Natural killer cell (primary cell): ENCODE measurements at regions of chr1 and their contacts with region 1.

Region 1: DNA sequence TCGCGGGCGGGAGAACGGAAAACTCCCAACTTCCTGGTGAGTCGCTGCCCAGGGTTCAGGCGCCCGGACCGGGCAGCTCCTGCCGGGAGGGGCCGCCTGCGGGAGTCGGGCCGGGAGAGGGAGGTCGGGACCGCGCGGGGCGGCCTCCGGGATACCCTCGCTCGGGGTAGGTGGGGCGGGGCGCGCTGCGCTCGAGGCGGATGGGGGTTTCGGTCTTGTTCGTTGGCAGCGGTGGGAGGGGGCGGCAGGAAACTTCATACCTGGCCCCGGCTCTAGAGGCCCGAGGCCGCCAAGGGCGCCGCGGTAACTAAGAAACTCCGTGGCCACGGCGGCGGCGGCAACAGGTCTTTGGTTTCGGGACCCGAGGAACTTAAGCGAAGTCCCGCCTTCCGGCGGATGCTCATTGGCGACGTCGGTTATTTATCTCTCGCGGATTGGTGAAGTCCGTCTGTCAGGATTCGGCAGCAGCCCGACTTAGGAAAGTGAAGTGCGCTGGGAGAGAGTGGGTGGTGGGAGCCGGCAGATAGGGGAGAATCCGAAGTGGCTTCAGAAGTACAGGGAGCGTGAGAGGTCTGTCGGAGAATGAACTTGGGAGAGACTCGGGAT is 546 bp downstream of the NEK7 start:
- DNase-seq: peak; percentile 74 to 91
- ATAC-seq: peak; percentile 43 to 62 (median 58)
- H3K4me3 ChIP-seq: peak overlapping the region; percentile 73
- H3K4me3 Mint-ChIP-seq: peak overlapping the region; percentile 99
- H3K27ac ChIP-seq: peak overlapping the region; percentile 88
- H3K27ac Mint-ChIP-seq: peak overlapping the region; percentile 96 to 99
- H3K4me1 ChIP-seq: peaks cover 16% of the 10 kb centered on the region
- H3K4me1 Mint-ChIP-seq: peaks cover 39 to 53% of the 10 kb centered on the region in 2 donors
- H3K27me3 ChIP-seq: no peaks in the 10 kb centered on the region
- H3K27me3 Mint-ChIP-seq: no peaks in the 10 kb centered on the region
- CTCF ChIP-seq: no peak

Region 2: DNA sequence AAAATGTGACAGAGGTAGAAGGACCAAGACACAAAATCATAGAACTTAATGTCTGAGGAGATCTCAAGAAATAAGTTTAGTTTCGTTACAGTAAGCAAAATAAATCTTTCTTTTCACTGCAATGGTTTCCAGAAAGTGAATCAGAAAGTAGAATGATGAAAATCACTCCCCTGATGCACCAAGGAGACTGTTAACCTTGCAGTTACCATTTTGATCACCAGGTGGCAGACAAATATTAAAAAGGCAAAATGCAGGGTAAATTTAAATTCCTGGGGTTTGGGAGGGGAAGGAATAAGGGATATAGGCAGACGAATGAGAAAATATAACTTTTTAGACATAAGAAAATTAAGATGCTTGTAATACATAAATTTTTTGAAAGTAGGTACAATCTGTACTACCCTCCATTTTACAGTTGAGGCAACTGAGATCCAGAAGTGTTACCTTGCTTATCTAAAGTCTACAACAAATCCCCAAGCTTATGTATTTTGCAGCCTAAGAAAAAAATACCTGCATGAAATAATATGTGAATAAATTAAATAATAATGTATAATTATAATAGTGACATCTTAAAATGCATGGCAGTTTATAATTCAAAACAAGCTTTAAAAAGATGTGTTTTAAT is 636.1 kb before region 1 on chr1:
- intact Hi-C with region 1: loop called (anchors 10 kb)
- DNase-seq: peak in 1 of 2 donors; percentile 63
- ATAC-seq: peak in 2 of 3 donors; percentile 57 to 64
- H3K4me3 ChIP-seq: no peak overlapping the region
- H3K4me3 Mint-ChIP-seq: no peak overlapping the region
- H3K27ac ChIP-seq: no peak overlapping the region
- H3K27ac Mint-ChIP-seq: no peak overlapping the region
- H3K4me1 ChIP-seq: no peaks in the 10 kb centered on the region
- H3K4me1 Mint-ChIP-seq: peaks cover 0 to 5% of the 10 kb centered on the region in 2 donors
- H3K27me3 ChIP-seq: no peaks in the 10 kb centered on the region
- H3K27me3 Mint-ChIP-seq: no peaks in the 10 kb centered on the region
- CTCF ChIP-seq: peak; percentile 84

Region 3: GRCh38 chr1:197915862-197916499 is 241.4 kb before region 1 on chr1:
- intact Hi-C with region 1: loop called (anchors 10 kb)
- DNase-seq: peak in 1 of 2 donors; percentile 32
- ATAC-seq: peak in 1 of 3 donors; percentile 24
- H3K4me3 ChIP-seq: no peak overlapping the region
- H3K4me3 Mint-ChIP-seq: peak overlapping the region; percentile 63
- H3K27ac ChIP-seq: no peak overlapping the region
- H3K27ac Mint-ChIP-seq: no peak overlapping the region
- H3K4me1 ChIP-seq: peaks cover 78% of the 10 kb centered on the region
- H3K4me1 Mint-ChIP-seq: peaks cover 70 to 80% of the 10 kb centered on the region in 2 donors
- H3K27me3 ChIP-seq: peaks cover 96% of the 10 kb centered on the region
- H3K27me3 Mint-ChIP-seq: peaks cover 89 to 93% of the 10 kb centered on the region in 2 donors
- CTCF ChIP-seq: no peak

Region 4: DNA sequence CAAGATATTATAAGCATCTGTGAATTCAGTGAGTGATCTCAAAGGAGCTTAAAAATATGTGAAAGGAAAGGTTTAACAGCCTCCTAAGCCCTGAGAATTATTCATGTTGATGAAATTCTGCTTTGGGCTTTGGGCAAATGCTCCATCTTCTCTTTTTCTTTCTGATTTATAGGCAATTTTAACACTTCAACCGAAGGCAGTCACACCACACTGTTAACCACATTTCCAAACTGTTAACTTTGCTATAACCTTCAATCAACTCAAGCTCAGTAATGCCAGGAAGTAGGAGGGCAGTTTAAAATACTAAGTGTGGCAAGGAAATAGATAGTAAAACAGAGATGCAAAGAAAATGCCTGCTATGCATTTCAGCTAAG is 54.9 kb before region 1 on chr1:
- intact Hi-C with region 1: loop called (anchors 2 kb)
- DNase-seq: peak in 1 of 2 donors; percentile 67
- ATAC-seq: peak; percentile 80 to 96 (median 84)
- H3K4me3 ChIP-seq: no peak overlapping the region
- H3K4me3 Mint-ChIP-seq: peak overlapping the region; percentile 76
- H3K27ac ChIP-seq: peak overlapping the region; percentile 43
- H3K27ac Mint-ChIP-seq: peak overlapping the region; percentile 65 to 73
- H3K4me1 ChIP-seq: peaks cover 12% of the 10 kb centered on the region
- H3K4me1 Mint-ChIP-seq: peaks cover 28 to 29% of the 10 kb centered on the region in 2 donors
- H3K27me3 ChIP-seq: no peaks in the 10 kb centered on the region
- H3K27me3 Mint-ChIP-seq: peaks cover 0 to 4% of the 10 kb centered on the region in 2 donors
- CTCF ChIP-seq: no peak

Region 5: DNA sequence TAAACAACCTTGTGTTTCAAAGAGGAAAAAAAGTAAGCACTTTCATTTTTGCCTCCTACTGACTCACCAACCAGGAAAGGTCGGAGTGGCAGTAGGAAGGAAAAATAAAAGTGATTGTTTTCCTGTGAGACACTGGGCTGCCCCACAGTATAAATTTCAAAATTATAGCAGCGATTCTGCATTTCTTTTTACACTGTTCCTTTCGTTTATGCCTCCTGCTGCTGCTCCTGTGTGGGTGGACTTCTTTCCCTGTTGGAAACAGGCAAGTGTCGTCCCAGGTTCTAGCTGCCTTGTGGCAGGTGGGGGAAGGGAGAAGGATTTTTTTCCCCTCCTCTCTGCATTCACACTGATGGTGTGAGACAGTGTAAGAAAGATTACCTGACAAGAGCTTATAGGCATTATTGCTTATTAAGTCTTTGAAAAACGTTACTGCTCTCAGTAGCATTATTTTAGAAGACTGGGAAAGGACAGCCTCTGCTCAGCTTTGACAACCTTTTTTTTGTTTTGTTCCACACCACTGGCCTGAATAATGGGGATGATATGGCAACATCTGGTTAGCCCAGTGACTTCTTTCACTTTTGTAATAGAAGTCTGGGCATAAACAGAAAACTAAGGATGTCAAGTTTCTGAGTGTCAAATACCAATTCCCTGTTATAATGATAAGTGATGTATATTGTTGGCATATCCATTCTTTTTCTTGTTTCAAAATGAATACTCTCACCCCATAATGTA is 77.3 kb after region 1 on chr1:
- intact Hi-C with region 1: loop called (anchors 5 kb)
- DNase-seq: peak in 1 of 2 donors; percentile 18
- ATAC-seq: peak; percentile 39 to 63 (median 62)
- H3K4me3 ChIP-seq: no peak overlapping the region
- H3K4me3 Mint-ChIP-seq: peak overlapping the region; percentile 47
- H3K27ac ChIP-seq: no peak overlapping the region
- H3K27ac Mint-ChIP-seq: peak overlapping the region; percentile 14 to 53
- H3K4me1 ChIP-seq: peaks cover 6% of the 10 kb centered on the region
- H3K4me1 Mint-ChIP-seq: peaks cover 22 to 29% of the 10 kb centered on the region in 2 donors
- H3K27me3 ChIP-seq: no peaks in the 10 kb centered on the region
- H3K27me3 Mint-ChIP-seq: no peaks in the 10 kb centered on the region
- CTCF ChIP-seq: no peak